Endothelial cell of umbilical vein (primary cell): ENCODE measurements at regions of chr15 and their contacts with region 1.

Region 1: DNA sequence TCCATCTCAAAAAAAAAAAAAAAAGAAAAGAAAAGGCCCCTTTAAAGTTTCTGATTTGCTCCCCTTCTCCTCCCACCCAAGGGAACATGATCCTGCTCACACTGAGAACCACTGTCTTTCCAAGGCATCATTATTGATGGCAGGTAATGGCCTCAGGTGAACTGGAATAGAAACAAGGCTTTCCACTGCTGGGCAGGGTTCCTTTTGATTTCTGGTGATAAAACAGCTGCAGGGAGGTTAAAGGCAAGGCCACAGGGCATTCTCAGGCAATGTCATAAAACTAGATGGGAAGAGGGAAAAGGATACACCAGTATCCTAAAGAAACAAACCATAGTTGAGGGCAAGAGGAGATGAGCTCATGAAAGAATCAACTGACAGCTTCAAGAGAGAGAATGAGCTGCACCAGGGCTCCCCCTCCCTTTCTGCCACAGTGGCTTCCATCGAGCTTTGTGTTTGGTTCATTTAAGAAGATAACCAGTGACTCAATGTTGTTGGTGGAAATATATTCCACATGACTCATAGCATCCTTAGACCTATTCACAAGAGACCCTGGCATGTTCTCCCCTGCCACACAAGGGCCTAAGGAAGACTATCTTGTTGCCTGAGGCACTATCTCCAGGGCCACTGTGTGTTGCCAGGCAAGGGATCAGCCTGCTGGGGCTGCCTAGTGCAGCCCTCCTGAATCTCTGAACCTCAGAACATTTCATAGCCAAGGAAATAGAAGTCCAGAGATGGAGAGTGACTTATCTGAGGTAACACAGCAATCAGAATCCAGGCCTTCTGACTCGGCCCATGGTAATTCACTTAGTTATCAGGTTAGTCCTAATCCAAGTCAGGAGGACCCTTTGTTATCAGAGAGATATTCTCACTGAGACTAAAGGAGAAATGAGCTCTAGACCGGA is 86.5 kb downstream of the WDR76 start:
- DNase-seq: peak; percentile 98
- H3K4me3 ChIP-seq: no peak overlapping the region
- H3K27ac ChIP-seq: peak overlapping the region; percentile 89
- H3K4me1 ChIP-seq: peaks cover 38% of the 10 kb centered on the region
- H3K27me3 ChIP-seq: no peaks in the 10 kb centered on the region
- CTCF ChIP-seq: no peak
- POLR2A ChIP-seq: peak; percentile 46

Region 2: GRCh38 chr15:43370975-43371974 is 542.0 kb before region 1 on chr15 and contains the starts of genes TUBGCP4 and ZSCAN29:
- CTCF ChIA-PET with region 1: no interaction called
- POLR2A ChIA-PET with region 1: no interaction called
- dilution Hi-C with region 1: no loop called
- intact Hi-C with region 1: no loop called
- DNase-seq: peak; percentile 81
- H3K4me3 ChIP-seq: peak within 1 kb of the TSS; percentile 69 to 93 (median 86)
- H3K27ac ChIP-seq: peak within 1 kb of the TSS; percentile 48
- H3K4me1 ChIP-seq: peaks cover 18% of the 10 kb centered on the region
- H3K27me3 ChIP-seq: no peaks in the 10 kb centered on the region
- CTCF ChIP-seq: peak; percentile 4 to 27
- POLR2A ChIP-seq: peak; percentile 40
- total RNA-seq, gene TUBGCP4: 19.4 and 19.8 TPM in 2 replicates
- total RNA-seq, gene ZSCAN29: 15.7 and 16.6 TPM in 2 replicates

Region 3: DNA sequence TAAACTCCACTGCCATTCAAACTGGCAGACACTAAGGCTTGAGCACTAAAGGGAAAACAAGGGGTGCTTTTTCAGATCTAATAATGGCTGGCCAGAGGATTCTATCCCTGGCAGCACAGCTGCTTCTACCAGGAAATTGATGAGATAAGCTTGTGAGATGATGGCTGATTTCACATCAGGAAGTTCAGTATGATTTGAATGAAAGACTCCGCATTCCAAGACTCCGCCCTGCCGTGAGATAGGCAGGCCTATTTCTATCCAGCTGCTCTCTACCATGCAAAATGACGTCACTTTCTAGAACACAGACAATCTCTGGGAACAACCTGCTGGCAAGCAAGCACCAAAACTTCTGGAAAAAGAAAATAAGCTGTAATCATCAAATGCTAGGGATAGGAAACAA is 85.3 kb after region 1 on chr15:
- CTCF ChIA-PET with region 1: no interaction called
- POLR2A ChIA-PET with region 1: no interaction called
- dilution Hi-C with region 1: no loop called
- intact Hi-C with region 1: loop called (anchors 1 kb)
- DNase-seq: peak; percentile 93
- H3K4me3 ChIP-seq: peak overlapping the region in 1 of 3 experiments; percentile 37
- H3K27ac ChIP-seq: peak overlapping the region; percentile 71
- H3K4me1 ChIP-seq: peaks cover 23% of the 10 kb centered on the region
- H3K27me3 ChIP-seq: no peaks in the 10 kb centered on the region
- CTCF ChIP-seq: no peak
- POLR2A ChIP-seq: no peak

Region 4: DNA sequence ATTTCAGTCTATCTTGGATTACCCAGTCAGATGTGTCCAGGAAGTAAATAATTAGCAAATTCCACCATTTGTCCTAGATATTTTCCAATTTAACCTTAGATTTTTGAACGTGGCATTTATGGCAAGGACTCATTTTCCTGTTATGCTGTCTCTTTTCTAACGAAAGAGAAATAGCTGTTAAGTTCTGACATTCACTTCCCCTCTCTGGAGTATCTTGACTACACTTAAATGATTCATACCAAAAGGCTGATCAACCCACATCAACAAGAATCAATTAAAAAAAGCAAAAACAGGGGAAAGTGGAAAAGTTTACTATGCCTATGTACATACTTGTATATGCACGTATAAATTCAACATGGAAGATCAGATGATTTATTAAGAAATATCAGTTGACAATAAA is 131.9 kb after region 1 on chr15:
- CTCF ChIA-PET with region 1: interaction called, 4 read pairs
- POLR2A ChIA-PET with region 1: interaction called, 10 read pairs
- dilution Hi-C with region 1: no loop called
- intact Hi-C with region 1: no loop called
- DNase-seq: peak; percentile 81
- H3K4me3 ChIP-seq: no peak overlapping the region
- H3K27ac ChIP-seq: peak overlapping the region; percentile 57
- H3K4me1 ChIP-seq: peaks cover 14% of the 10 kb centered on the region
- H3K27me3 ChIP-seq: no peaks in the 10 kb centered on the region
- CTCF ChIP-seq: no peak
- POLR2A ChIP-seq: no peak